Psoas muscle (tissue), 8 donors: ENCODE measurements at regions of chr4 and their contacts with region 1.

Region 1: DNA sequence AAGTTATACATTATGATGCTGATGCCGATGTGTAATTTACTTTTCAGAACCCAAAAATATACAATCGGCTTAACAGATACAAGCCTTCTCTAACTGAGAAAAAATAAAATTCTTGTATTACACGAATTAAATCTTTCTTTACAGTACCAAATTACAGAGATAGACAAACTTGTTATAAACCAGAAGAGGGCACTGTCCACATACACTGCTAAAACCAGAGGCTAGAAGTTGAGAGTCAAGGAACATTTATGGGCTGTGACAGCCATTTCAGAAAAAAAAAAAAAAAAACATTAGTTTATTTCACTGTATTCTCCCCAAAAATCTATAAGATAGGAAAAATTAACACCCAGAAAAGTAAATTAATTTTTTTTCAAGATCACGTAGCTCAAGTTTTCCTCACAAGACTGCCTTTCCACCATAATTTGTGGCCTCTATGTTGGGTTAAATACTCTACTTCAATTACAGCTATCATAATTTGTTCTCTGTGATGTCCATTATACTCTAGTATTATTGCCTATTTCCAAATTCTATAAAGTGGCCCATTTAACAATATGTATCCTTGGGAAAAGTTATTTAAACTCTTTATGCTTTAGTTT is 12.0 kb downstream of the EREG start:
- DNase-seq: no peak
- ATAC-seq: peak in 2 of 4 donors; percentile 58 to 62
- H3K4me3 ChIP-seq: no peak overlapping the region
- H3K27ac ChIP-seq: no peak overlapping the region
- H3K4me1 ChIP-seq: no peaks in the 10 kb centered on the region
- H3K27me3 ChIP-seq: no peaks in the 10 kb centered on the region
- CTCF ChIP-seq: peak; percentile 41

Region 2: DNA sequence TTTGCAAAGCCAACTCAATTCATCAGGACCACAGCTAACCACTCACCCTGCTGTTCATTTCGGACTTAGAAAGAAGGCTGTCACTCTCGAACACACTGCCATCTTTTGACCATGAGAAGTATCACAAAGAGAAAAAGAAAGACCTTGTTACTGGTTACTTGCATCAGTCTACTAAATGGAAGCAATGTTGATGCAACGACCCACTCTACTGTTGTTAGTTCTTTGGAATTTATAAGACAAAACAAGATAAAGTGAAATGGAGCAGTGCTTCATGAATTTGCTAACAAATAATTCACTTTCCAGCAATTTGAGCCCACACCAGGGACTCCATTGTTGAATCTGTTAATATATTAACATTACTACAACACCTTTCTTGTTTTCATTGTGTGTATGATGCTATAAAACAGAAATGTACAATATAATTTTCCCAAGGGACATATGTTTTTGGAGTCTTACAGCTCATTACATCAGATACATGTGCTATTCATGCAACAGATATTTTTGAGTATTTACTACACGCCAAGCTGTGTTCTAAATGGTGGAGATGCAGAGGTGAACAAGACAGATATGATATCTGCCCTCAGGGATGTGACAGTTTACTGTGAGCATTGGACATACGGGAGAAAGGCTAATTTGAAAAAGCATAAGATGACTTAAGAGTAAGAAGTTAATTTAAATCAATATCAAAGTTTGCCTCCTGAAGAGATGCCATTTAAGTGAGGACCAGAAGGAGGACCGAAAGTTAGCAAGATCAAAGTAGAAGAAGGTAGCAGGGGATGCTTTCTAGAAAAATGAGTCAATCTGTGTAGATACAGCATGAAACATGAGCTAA is 155.2 kb after region 1 on chr4:
- intact Hi-C with region 1: loop called in 1 of 2 experiments (anchors 5 kb)
- DNase-seq: no peak
- ATAC-seq: peak in 2 of 4 donors; percentile 59 to 61
- H3K4me3 ChIP-seq: no peak overlapping the region
- H3K27ac ChIP-seq: no peak overlapping the region
- H3K4me1 ChIP-seq: no peaks in the 10 kb centered on the region
- H3K27me3 ChIP-seq: no peaks in the 10 kb centered on the region
- CTCF ChIP-seq: peak; percentile 34

Region 3: DNA sequence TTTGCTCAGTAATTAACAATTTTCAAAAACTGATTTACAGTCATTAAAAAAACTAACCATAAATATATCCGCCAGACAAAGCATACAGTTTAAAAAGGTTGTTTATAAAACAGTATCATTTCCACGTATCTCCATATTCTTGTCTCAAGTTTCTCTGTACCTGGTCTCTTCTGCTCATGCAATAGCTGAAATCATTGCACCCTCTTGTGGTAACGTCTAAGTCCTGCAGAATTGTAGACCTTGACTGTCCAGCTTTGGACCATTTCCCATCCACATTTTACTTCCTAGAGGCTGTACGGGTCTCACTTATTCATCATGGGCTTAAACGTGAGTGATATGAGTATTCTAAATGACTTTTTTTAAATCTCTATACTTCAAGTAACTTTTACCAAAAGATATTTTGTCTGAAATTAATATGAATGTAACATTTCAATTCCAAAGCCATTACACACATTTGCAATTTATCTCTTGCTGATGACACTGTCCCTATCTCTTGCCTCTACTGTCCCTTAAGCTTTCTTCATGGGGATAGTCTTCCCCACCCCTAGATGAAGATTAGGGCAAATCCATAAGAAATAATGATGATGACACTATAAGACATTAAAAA is 298.8 kb after region 1 on chr4:
- intact Hi-C with region 1: loop called (anchors 5 to 10 kb)
- DNase-seq: no peak
- ATAC-seq: no peak
- H3K4me3 ChIP-seq: no peak overlapping the region
- H3K27ac ChIP-seq: no peak overlapping the region
- H3K4me1 ChIP-seq: no peaks in the 10 kb centered on the region
- H3K27me3 ChIP-seq: no peaks in the 10 kb centered on the region
- CTCF ChIP-seq: peak; percentile 39

Region 4: DNA sequence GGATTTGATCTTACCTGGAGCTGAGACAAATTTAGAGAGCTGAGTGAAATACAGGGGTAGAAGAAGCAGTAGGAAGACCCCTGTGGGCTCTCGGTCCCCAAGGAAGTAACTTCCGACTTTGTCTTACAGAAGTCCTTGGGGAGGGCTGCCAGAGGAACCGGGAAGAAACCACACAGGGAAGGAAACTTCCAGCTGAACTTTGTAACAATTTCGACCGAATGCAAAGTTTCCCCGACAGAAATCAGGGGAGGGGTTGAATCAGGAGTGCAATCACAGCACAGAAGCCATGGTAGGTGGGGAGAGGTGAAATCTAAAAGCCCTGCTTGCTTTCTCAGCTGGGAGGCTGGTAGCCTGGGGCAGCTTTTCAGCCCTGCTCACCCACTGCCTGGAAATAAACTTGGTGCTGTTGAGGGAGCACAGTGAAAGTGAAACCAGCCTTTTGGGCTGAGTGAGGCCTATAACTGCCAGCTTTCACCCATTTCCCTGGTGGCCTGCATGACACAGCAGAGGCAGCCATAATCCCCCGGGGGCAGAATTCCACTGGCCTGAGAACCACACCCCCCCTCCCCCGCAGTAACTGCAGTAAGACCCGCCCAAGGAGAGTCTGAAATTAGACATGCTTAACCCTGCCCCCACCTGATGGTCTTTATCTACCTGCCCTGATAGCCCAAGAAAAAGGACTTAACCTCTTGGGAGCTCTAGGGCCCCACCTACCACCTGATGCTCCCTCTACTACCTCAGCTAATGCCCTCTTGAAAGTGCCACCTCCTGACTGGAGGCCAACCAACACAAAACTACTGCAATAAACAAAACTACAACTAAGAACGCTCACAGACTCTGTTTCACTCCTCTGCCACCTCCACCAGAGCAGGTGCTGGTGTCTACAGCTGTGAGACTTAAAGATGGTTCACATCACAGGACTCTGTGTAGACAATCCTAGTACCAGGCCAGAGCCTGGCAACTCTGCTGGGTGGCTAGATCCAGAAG is 804.1 kb after region 1 on chr4:
- intact Hi-C with region 1: no loop called
- DNase-seq: no peak
- ATAC-seq: no peak
- H3K4me3 ChIP-seq: no peak overlapping the region
- H3K27ac ChIP-seq: no peak overlapping the region
- H3K4me1 ChIP-seq: no peaks in the 10 kb centered on the region
- H3K27me3 ChIP-seq: no peaks in the 10 kb centered on the region
- CTCF ChIP-seq: no peak